HepG2 (cell line): ENCODE measurements at regions of chr4 and their contacts with region 1.

Region 1: DNA sequence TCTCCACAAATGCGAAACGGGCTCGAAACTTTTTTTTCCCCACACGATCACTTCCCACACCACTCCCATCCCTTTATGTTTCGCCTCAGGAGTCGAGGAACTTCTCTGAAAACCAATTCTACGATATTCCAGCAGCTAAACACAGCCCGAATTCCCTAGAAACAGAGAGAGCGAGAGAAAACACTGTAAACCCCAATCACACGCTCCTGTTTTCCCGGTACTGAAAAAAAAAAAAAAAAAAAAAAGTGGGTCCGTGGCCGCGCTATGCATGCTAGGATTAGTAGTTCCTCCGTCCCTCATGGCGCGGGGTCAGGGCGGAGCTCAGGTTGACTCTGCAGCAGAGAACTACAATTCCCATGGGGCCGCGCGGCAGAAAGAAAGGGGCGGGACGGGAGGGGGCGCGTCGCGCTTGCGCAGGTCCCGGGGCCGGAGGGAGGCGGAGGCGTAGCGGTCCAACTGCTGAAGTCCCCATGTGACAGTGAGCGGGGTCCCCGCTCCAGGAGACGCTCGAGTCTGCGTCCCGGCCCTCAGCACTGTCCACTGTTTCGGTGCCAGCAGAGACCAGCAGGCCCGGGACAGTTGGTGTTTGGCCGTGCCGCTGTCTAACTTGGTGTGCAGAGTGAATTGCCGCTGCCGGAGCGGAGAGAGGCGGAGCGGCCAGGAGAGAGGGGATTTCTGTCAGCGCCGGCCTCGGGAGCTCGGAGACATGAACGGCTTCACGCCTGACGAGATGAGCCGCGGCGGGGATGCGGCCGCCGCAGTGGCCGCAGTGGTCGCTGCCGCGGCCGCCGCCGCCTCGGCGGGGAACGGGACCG is at the start of gene SAP30:
- DNase-seq: peak; percentile 95
- ATAC-seq: peak; percentile 89
- H3K4me3 ChIP-seq: peak within 1 kb of the TSS; percentile 91 to 94 (median 92)
- H3K27ac ChIP-seq: peak within 1 kb of the TSS; percentile 91
- H3K4me1 ChIP-seq: peaks cover 17% of the 10 kb centered on the region
- H3K27me3 ChIP-seq: no peaks in the 10 kb centered on the region; a peak in 1 of 5 replicates
- CTCF ChIP-seq: no peak
- EP300 ChIP-seq: no peak
- POLR2A ChIP-seq: peak; percentile 94 to 99
- RAD21 ChIP-seq: no peak
- total RNA-seq, gene SAP30: 22.3 and 25.1 TPM in 2 replicates

Region 2: DNA sequence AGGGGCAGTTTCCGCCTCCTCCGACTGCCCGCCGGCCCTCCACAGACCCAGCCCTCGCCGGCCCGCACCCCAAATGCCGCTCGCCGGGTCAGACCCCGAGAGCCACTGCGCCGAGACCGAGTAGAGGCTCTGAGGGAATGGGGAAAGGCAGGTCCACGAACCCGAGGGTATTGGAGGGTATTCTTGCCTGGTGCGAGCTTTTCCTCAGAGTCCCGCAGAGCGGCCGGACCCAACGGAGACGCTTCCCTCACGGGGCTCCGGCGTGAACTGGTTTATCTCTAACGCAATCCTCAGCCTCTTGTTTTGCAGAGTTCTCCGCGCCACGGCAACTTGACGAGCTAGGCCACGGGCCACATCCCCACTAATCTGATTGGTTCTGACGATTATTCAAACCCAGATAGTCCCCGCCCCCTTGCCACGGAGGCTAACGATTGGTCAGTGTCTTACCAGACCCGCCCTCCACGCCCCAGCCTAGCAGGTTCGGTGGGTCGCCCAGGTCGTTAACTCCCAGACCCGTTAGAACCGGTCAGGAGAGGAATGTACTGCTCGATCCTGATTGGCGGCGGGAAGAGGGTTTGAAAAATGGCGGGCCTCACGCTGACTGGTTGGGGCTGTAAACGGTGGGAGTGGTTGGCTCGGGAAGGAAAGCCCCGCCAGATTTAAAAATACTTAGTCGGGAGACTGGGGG is 36.5 kb before region 1 on chr4 and contains the start of gene HMGB2:
- CTCF ChIA-PET with region 1: no interaction called
- POLR2A ChIA-PET with region 1: interaction called, 109 read pairs
- in situ Hi-C with region 1: loop called (anchors 5 kb)
- intact Hi-C with region 1: loop called (anchors 1 kb)
- DNase-seq: peak; percentile 99
- ATAC-seq: peak; percentile 94
- H3K4me3 ChIP-seq: peak within 1 kb of the TSS; percentile 91 to 95 (median 92)
- H3K27ac ChIP-seq: peak within 1 kb of the TSS; percentile 99
- H3K4me1 ChIP-seq: peaks cover 23% of the 10 kb centered on the region
- H3K27me3 ChIP-seq: no peaks in the 10 kb centered on the region; a peak in 2 of 5 replicates
- CTCF ChIP-seq: no peak
- EP300 ChIP-seq: no peak
- POLR2A ChIP-seq: peak; percentile 99
- RAD21 ChIP-seq: 0 out of 2 replicates have a peak, but pooled peaks have one; percentile 17
- total RNA-seq, gene HMGB2: 332 and 478 TPM in 2 replicates